ENCODE measurements at regions of chr4 and their contacts with region 1.

Region 1: GRCh38 chr4:125314676-125315575 is at the start of gene FAT4:
- DNase-seq: peak; percentile 84 to 98 (median 90)

Region 2: GRCh38 chr4:125432104-125432503 is 117.2 kb after region 1 on chr4:
- intact Hi-C with region 1: loop called (anchors 5 kb)
- DNase-seq: peak in 5 of 10 donors; percentile 7 to 79 (median 55)

Region 3: GRCh38 chr4:125741825-125742452 is 427.0 kb after region 1 on chr4:
- intact Hi-C with region 1: loop called (anchors 2 kb)
- DNase-seq: no peak

Region 4: DNA sequence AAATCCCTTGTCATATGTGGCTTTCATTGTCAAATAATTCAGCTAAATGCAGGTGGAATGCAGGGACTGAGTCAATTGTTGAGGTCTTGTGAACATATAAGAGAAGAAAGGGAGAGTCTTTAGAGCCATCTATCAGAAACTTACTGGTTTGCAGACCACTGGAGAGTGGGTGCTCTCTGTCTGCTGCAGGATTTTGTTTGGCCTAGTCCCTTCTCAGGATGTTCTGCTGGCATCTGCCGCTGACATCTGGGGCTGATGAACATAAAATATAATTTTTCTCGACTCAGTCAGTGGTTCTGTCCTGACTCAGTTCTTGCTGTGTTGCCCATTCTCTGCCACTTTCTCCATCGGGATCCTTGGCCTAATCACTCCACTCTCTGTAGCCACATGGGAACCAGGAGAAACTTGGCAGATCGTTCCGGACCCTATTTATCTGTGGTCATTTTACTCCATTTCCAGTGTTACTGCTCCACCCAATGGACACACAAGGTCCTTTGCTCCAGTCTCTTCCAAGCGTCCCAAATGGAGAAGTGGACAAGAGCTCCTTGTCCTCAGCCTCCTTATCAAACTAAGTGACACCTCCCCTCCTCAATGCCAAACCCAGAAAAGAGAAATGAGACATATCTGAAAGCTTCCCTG is 436.0 kb after region 1 on chr4:
- intact Hi-C with region 1: loop called (anchors 1 kb)
- DNase-seq: peak in 2 of 10 donors; percentile 4 to 26

Region 5: DNA sequence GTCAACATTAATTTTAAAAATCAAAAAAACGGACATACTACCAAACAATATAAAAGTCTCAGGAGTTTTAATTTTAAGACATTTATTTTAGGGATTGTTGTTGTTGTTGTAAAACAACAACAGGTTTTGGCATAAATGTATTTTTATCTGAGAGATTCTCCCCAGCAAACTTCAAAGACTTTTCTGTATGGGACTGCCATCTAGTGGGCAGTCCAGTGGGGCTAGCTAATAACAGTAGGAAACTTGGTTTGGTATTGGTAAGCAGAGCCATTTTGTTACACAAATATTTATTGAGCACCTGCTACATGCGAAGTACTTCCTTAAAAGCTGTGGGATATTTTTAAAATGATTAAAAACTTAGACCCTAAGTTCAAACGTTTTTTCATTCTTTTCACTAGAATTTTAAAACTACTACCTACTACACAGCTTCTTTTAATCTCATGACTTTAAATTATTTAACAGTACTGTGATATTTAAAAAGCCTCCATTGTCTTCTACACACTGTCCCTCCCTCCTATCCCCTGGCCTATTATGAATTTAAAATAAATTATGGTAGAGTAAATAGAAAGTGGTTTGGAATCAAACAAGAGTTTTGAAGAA is 1289.4 kb after region 1 on chr4:
- intact Hi-C with region 1: loop called (anchors 2 kb)
- DNase-seq: peak in 3 of 10 donors; percentile 18 to 45 (median 41)